ENCODE measurements at regions of chr2 and their contacts with region 1.

Region 1: GRCh38 chr2:47272031-47272864 is 117.1 kb upstream of the STPG4 start:
- DNase-seq: no peak
- ATAC-seq: peak; percentile 97
- H3K4me3 ChIP-seq: peak overlapping the region; percentile 71
- H3K27ac ChIP-seq: peak overlapping the region; percentile 20; the same call in 1 of the 2 replicates
- H3K4me1 ChIP-seq: peaks cover 18% of the 10 kb centered on the region
- H3K27me3 ChIP-seq: no peaks in the 10 kb centered on the region
- CTCF ChIP-seq: peak; percentile 84 to 98 (median 92)
- EP300 ChIP-seq: no peak
- POLR2A ChIP-seq: peak; percentile 74
- RAD21 ChIP-seq: peak; percentile 52

Region 2: DNA sequence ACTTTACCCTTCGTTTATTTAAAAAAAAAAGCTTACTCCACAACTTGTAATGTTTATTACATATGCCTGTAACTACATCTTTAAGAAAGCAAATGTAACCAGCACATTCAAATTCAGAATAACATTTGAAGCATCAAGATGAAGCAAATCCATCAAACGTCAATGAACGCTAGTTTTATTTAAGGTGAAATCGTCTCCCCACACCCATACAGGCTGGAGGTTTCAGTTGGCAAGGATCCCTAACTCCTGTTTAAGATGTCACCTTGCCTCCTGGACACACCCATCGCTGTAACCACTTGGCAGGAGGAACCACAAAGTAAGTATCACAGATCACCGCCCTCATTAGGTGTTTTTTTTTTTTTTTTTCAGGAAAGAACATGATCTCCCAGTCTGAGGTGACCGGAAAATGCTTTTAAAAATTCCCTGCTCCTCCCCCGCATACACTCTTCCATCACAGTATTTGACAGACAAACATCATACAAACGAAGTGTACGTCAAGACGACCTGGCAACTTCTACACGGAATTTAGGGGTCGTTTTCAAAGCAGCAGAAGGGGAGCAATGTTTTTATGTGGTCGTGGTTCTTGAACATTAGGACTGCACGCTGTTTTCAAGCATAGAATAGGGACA is 97.4 kb before region 1 on chr2:
- CTCF ChIA-PET with region 1: interaction called, 10 read pairs
- POLR2A ChIA-PET with region 1: interaction called, 4 read pairs
- RAD21 ChIA-PET with region 1: interaction called, 8 read pairs
- SMC1A ChIA-PET with region 1: interaction called, 8 read pairs
- in situ Hi-C with region 1: no loop called
- intact Hi-C with region 1: no loop called
- DNase-seq: no peak
- ATAC-seq: peak; percentile 37
- H3K4me3 ChIP-seq: peak overlapping the region; percentile 98
- H3K27ac ChIP-seq: peak overlapping the region; percentile 100
- H3K4me1 ChIP-seq: peaks cover 7% of the 10 kb centered on the region
- H3K27me3 ChIP-seq: no peaks in the 10 kb centered on the region
- CTCF ChIP-seq: no peak
- EP300 ChIP-seq: no peak
- POLR2A ChIP-seq: no peak
- RAD21 ChIP-seq: no peak

Region 3: DNA sequence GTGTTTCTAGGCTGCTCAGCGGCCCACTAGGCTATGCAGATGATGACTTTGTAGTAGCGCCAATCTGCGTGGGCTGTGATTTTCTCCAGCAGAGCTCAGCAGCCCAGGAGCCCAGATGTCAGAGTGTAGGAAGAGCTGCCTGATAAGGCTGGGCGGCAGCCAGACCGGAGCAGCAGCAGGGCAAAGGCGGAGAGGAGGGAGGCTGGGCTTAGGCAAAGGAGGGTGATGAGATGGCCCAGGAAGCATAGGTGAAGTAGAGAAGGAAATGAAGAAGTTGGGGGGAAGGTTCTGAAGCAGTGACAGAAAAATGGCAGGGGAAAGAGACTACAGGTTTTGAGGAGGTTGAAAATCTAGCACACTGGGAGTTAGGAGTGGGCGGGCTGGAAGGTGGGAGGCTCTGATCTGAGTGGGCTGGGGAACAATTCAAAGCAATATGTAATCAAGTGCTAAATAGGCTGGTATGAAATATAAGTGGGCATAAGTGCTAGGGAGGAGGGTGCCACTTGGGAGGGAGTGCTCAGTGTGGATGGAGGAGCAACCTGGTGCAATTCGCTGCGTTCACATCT is 66.6 kb before region 1 on chr2:
- CTCF ChIA-PET with region 1: no interaction called
- POLR2A ChIA-PET with region 1: no interaction called
- RAD21 ChIA-PET with region 1: no interaction called
- SMC1A ChIA-PET with region 1: no interaction called
- in situ Hi-C with region 1: no loop called
- intact Hi-C with region 1: no loop called
- DNase-seq: no peak
- ATAC-seq: no peak
- H3K4me3 ChIP-seq: no peak overlapping the region
- H3K27ac ChIP-seq: no peak overlapping the region
- H3K4me1 ChIP-seq: no peaks in the 10 kb centered on the region; the same call in 1 of the 2 replicates
- H3K27me3 ChIP-seq: no peaks in the 10 kb centered on the region
- CTCF ChIP-seq: no peak
- EP300 ChIP-seq: no peak
- POLR2A ChIP-seq: no peak
- RAD21 ChIP-seq: no peak

Region 4: DNA sequence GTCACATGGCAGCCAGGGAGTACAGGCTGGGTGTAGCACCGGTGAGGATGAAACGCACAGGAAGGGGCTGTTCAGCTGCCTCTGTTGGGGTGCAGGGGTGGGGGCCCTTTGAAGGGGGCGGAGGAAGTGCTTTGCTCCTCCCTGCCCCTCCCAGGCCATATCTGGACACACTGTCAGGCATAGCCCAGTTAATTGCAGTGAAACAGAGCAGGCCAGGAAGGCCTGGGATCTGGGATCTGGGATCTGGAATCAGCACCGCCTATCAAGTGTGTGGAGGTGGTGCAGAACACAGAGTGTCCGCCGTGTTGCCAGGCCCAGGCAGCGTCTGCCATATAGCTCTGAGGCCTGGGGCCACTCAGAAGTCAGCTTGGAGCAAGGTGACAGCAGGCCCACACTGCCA is 11.4 kb after region 1 on chr2:
- CTCF ChIA-PET with region 1: interaction called, 29 read pairs
- POLR2A ChIA-PET with region 1: interaction called, 6 read pairs
- RAD21 ChIA-PET with region 1: no interaction called
- SMC1A ChIA-PET with region 1: interaction called, 9 read pairs
- in situ Hi-C with region 1: no loop called
- intact Hi-C with region 1: no loop called
- DNase-seq: no peak
- ATAC-seq: no peak
- H3K4me3 ChIP-seq: no peak overlapping the region
- H3K27ac ChIP-seq: no peak overlapping the region
- H3K4me1 ChIP-seq: no peaks in the 10 kb centered on the region
- H3K27me3 ChIP-seq: no peaks in the 10 kb centered on the region
- CTCF ChIP-seq: no peak
- EP300 ChIP-seq: no peak
- POLR2A ChIP-seq: no peak
- RAD21 ChIP-seq: no peak

Region 5: DNA sequence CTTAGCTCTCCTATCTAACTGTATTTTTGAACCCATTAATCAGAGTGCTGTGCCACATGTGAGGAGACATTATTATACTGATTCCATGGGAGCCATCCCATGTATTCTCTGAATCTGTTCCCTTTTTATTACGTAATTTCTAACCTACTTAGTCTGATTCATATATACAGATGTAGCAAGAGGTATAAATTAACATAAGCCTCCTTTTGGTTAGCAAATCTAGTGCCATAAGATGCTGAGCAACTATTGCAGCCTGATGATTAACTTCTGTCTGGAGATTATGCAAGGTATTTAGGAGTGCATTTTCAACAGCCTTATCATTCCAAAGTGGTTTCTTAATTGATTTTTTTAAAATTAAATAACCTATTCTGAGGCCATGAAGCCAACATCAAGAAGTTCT is 16.6 kb after region 1 on chr2:
- CTCF ChIA-PET with region 1: interaction called, 13 read pairs
- POLR2A ChIA-PET with region 1: no interaction called
- RAD21 ChIA-PET with region 1: no interaction called
- SMC1A ChIA-PET with region 1: interaction called, 5 read pairs
- in situ Hi-C with region 1: no loop called
- intact Hi-C with region 1: no loop called
- DNase-seq: no peak
- ATAC-seq: no peak
- H3K4me3 ChIP-seq: no peak overlapping the region
- H3K27ac ChIP-seq: no peak overlapping the region
- H3K4me1 ChIP-seq: no peaks in the 10 kb centered on the region
- H3K27me3 ChIP-seq: no peaks in the 10 kb centered on the region
- CTCF ChIP-seq: no peak
- EP300 ChIP-seq: no peak
- POLR2A ChIP-seq: no peak
- RAD21 ChIP-seq: no peak

Region 6: GRCh38 chr2:47520825-47521665 is 248.8 kb after region 1 on chr2:
- CTCF ChIA-PET with region 1: no interaction called
- POLR2A ChIA-PET with region 1: no interaction called
- RAD21 ChIA-PET with region 1: no interaction called
- SMC1A ChIA-PET with region 1: no interaction called
- in situ Hi-C with region 1: no loop called
- intact Hi-C with region 1: no loop called
- DNase-seq: peak; percentile 28
- ATAC-seq: peak; percentile 89
- H3K4me3 ChIP-seq: peak overlapping the region; percentile 69; the same call in 1 of the 2 replicates
- H3K27ac ChIP-seq: peak overlapping the region; percentile 33
- H3K4me1 ChIP-seq: peaks cover 15% of the 10 kb centered on the region
- H3K27me3 ChIP-seq: no peaks in the 10 kb centered on the region; a peak in 1 of 4 replicates
- CTCF ChIP-seq: peak; percentile 42 to 50 (median 48); a peak in 5 of 6 replicates
- EP300 ChIP-seq: no peak
- POLR2A ChIP-seq: peak; percentile 57
- RAD21 ChIP-seq: peak; percentile 36; the same call in 1 of the 2 replicates

Measured in GM12878 (cell line).